Transverse colon (tissue), 4 donors: ENCODE measurements at regions of chr1 and their contacts with region 1.

Region 1: GRCh38 chr1:25392841-25393240 is 27.8 kb downstream of the RHCE start:
- DNase-seq: no peak
- H3K4me3 ChIP-seq: no peak overlapping the region
- H3K27ac ChIP-seq: no peak overlapping the region
- H3K4me1 ChIP-seq: no peaks in the 10 kb centered on the region
- H3K27me3 ChIP-seq: no peaks in the 10 kb centered on the region
- CTCF ChIP-seq: no peak
- EP300 ChIP-seq: no peak
- POLR2A ChIP-seq: no peak

Region 2: GRCh38 chr1:25520446-25521061 is 127.7 kb after region 1 on chr1:
- in situ Hi-C with region 1: loop called in 1 of 4 experiments (anchors 10 kb)
- intact Hi-C with region 1: no loop called
- DNase-seq: peak; percentile 72
- H3K4me3 ChIP-seq: no peak overlapping the region
- H3K27ac ChIP-seq: no peak overlapping the region
- H3K4me1 ChIP-seq: no peaks in the 10 kb centered on the region
- H3K27me3 ChIP-seq: no peaks in the 10 kb centered on the region
- CTCF ChIP-seq: peak; percentile 78 to 87 (median 84)
- EP300 ChIP-seq: no peak
- POLR2A ChIP-seq: no peak